ENCODE measurements at regions of chr22 and their contacts with region 1.

Region 1: GRCh38 chr22:49960159-49961004 is at the start of gene PIM3:
- DNase-seq: peak; percentile 97
- H3K4me3 ChIP-seq: peak within 1 kb of the TSS; percentile 67 to 96 (median 82)
- H3K27ac ChIP-seq: peak within 1 kb of the TSS; percentile 89 to 99 (median 96)
- H3K4me1 ChIP-seq: peaks cover 0 to 51% (median 34%) of the 10 kb centered on the region in 4 donors
- H3K27me3 ChIP-seq: no peaks in the 10 kb centered on the region
- CTCF ChIP-seq: no peak
- EP300 ChIP-seq: no peak
- POLR2A ChIP-seq: peak; percentile 32 to 89
- total RNA-seq, gene PIM3: 26.3 to 50.0 (median 41.8) TPM

Region 2: GRCh38 chr22:49827853-49828598 is 132.4 kb before region 1 on chr22 and contains the start of gene BRD1:
- intact Hi-C with region 1: loop called (anchors 5 kb)
- DNase-seq: no peak
- H3K4me3 ChIP-seq: peak within 1 kb of the TSS; percentile 67 to 83 (median 74)
- H3K27ac ChIP-seq: peak within 1 kb of the TSS; percentile 86 to 98 (median 90)
- H3K4me1 ChIP-seq: peaks cover 0 to 42% (median 35%) of the 10 kb centered on the region in 4 donors
- H3K27me3 ChIP-seq: no peaks in the 10 kb centered on the region
- CTCF ChIP-seq: no peak
- EP300 ChIP-seq: no peak
- POLR2A ChIP-seq: no peak
- total RNA-seq, gene BRD1: 31.1 to 52.6 (median 35.9) TPM

Region 3: DNA sequence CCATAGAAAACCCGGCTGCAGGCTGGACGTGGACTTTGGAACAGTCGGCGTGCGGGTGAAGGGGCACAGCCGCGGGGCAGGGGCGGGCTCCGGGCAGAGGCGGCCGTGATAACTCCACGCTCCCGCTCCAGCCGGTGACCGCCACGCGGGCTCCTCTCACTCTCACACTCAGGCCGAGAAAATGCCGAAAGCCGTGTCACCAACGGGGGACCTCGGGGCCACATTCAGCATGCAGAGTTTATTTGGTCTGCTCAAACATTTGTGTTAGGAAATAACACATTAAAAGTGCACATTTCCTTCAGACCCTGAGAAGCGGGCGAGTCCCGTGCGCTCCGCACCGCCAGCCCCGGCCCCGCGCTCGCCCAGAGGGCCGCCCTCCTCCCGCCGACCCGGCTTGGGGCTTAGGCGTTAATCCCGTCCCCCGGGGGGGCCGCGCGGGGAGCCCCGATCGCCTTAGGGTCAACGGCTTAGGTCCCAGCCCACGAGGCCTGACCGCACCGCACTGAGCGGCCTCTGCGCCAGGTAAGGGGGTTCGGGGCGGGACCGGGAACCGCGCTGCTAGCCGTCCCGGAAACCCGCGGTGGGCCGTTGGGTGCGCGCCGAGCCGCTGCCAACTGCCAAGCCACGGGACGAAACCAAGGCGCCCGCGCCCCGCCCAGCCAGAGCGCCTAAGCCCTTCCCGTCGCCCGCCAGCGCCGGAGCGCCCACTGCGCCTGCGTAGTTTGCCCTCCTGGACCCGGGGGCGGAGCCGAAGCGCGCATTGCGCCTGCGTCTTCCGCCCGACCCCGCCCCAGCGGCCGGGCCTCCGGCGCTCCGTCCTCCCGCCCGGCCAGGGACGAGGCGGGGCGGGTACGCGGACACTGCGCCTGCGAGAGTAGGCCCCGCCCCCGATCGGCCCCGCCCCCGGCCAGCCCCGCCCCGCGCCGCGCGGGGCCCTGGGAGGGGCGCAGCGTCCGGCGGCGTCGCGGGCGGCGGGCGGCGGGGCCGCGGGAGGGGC is 107.2 kb before region 1 on chr22 and contains the start of gene ZBED4:
- intact Hi-C with region 1: loop called (anchors 5 kb)
- DNase-seq: peak; percentile 97
- H3K4me3 ChIP-seq: peak within 1 kb of the TSS; percentile 52 to 70 (median 63)
- H3K27ac ChIP-seq: peak within 1 kb of the TSS; percentile 91 to 94 (median 92)
- H3K4me1 ChIP-seq: peaks cover 0 to 49% (median 40%) of the 10 kb centered on the region in 4 donors
- H3K27me3 ChIP-seq: peaks cover 16 to 26% (median 20%) of the 10 kb centered on the region in 3 donors
- CTCF ChIP-seq: no peak
- EP300 ChIP-seq: peak in 1 of 4 donors; percentile 28
- POLR2A ChIP-seq: peak; percentile 27 to 54
- total RNA-seq, gene ZBED4: 3.9 to 7.5 (median 5.5) TPM

Region 4: GRCh38 chr22:49917974-49918910 is 42.1 kb before region 1 on chr22 and contains the starts of genes ALG12 and CRELD2:
- intact Hi-C with region 1: loop called (anchors 1 kb)
- DNase-seq: peak; percentile 99
- H3K4me3 ChIP-seq: peak within 1 kb of the TSS; percentile 47 to 93 (median 84)
- H3K27ac ChIP-seq: peak within 1 kb of the TSS; percentile 93 to 97 (median 94)
- H3K4me1 ChIP-seq: peaks cover 0 to 28% (median 22%) of the 10 kb centered on the region in 4 donors
- H3K27me3 ChIP-seq: no peaks in the 10 kb centered on the region
- CTCF ChIP-seq: no peak
- EP300 ChIP-seq: no peak
- POLR2A ChIP-seq: no peak
- total RNA-seq, gene ALG12: 11.4 to 23.9 (median 15.4) TPM
- total RNA-seq, gene CRELD2: 15.5 to 26.5 (median 23.1) TPM

Region 5: GRCh38 chr22:49936018-49936952 is 24.1 kb before region 1 on chr22:
- intact Hi-C with region 1: loop called (anchors 1 kb)
- DNase-seq: peak; percentile 97
- H3K4me3 ChIP-seq: peak overlapping the region; percentile 41 to 61 (median 58)
- H3K27ac ChIP-seq: peak overlapping the region; percentile 88 to 96 (median 90)
- H3K4me1 ChIP-seq: peaks cover 0 to 47% (median 43%) of the 10 kb centered on the region in 4 donors
- H3K27me3 ChIP-seq: no peaks in the 10 kb centered on the region
- CTCF ChIP-seq: no peak
- EP300 ChIP-seq: peak in 2 of 4 donors; percentile 44 to 52
- POLR2A ChIP-seq: peak; percentile 23 to 40

Region 6: GRCh38 chr22:49942565-49943404 is 17.6 kb before region 1 on chr22:
- intact Hi-C with region 1: loop called (anchors 2 kb)
- DNase-seq: no peak
- H3K4me3 ChIP-seq: no peak overlapping the region
- H3K27ac ChIP-seq: no peak overlapping the region
- H3K4me1 ChIP-seq: peaks cover 0 to 1% (median under 1%) of the 10 kb centered on the region in 4 donors
- H3K27me3 ChIP-seq: no peaks in the 10 kb centered on the region
- CTCF ChIP-seq: no peak
- EP300 ChIP-seq: no peak
- POLR2A ChIP-seq: no peak

Region 7: GRCh38 chr22:49971232-49972162 is 11.1 kb after region 1 on chr22:
- intact Hi-C with region 1: no loop called
- DNase-seq: peak; percentile 88
- H3K4me3 ChIP-seq: peak overlapping the region; percentile 41 to 62 (median 54)
- H3K27ac ChIP-seq: peak overlapping the region; percentile 76 to 95 (median 86)
- H3K4me1 ChIP-seq: peaks cover 2 to 42% (median 38%) of the 10 kb centered on the region in 4 donors
- H3K27me3 ChIP-seq: no peaks in the 10 kb centered on the region
- CTCF ChIP-seq: no peak
- EP300 ChIP-seq: peak in 2 of 4 donors; percentile 45 to 66
- POLR2A ChIP-seq: no peak

Region 8: GRCh38 chr22:50185384-50186087 is 225.2 kb after region 1 on chr22 and contains the start of gene TRABD:
- intact Hi-C with region 1: loop called (anchors 10 kb)
- DNase-seq: peak; percentile 95
- H3K4me3 ChIP-seq: peak within 1 kb of the TSS; percentile 61 to 90 (median 81)
- H3K27ac ChIP-seq: peak within 1 kb of the TSS; percentile 64 to 77 (median 76)
- H3K4me1 ChIP-seq: peaks cover 0 to 55% (median 50%) of the 10 kb centered on the region in 4 donors
- H3K27me3 ChIP-seq: peaks cover 0 to 2% (median 0%) of the 10 kb centered on the region in 3 donors
- CTCF ChIP-seq: no peak
- EP300 ChIP-seq: no peak
- POLR2A ChIP-seq: no peak
- total RNA-seq, gene TRABD: 14.2 to 21.4 (median 18.2) TPM

Measured in sigmoid colon (tissue), 7 donors.